Activated naive CD4-positive, alpha-beta T cell treated with anti-CD3 and anti-CD28 coated beads for 36 hours (primary cell): ENCODE measurements at regions of chr10 and their contacts with region 1.

Region 1: GRCh38 chr10:114470956-114471905 is 66.9 kb upstream of the AFAP1L2 start:
- DNase-seq: peak; percentile 79
- H3K4me3 Mint-ChIP-seq: no peak overlapping the region
- H3K27ac Mint-ChIP-seq: peak overlapping the region; percentile 44
- H3K4me1 Mint-ChIP-seq: peaks cover 22% of the 10 kb centered on the region
- H3K27me3 Mint-ChIP-seq: no peaks in the 10 kb centered on the region

Region 2: GRCh38 chr10:114486938-114487814 is 15.9 kb after region 1 on chr10:
- CTCF ChIA-PET with region 1: interaction called, 38 read pairs
- intact Hi-C with region 1: loop called (anchors 1 kb)
- DNase-seq: peak; percentile 48
- H3K4me3 Mint-ChIP-seq: no peak overlapping the region
- H3K27ac Mint-ChIP-seq: peak overlapping the region; percentile 80
- H3K4me1 Mint-ChIP-seq: peaks cover 60% of the 10 kb centered on the region
- H3K27me3 Mint-ChIP-seq: no peaks in the 10 kb centered on the region

Region 3: GRCh38 chr10:114515298-114515914 is 44.2 kb after region 1 on chr10:
- CTCF ChIA-PET with region 1: interaction called, 17 read pairs
- intact Hi-C with region 1: no loop called
- DNase-seq: peak; percentile 42
- H3K4me3 Mint-ChIP-seq: peak overlapping the region; percentile 8
- H3K27ac Mint-ChIP-seq: peak overlapping the region; percentile 80
- H3K4me1 Mint-ChIP-seq: peaks cover 90% of the 10 kb centered on the region
- H3K27me3 Mint-ChIP-seq: no peaks in the 10 kb centered on the region

Region 4: DNA sequence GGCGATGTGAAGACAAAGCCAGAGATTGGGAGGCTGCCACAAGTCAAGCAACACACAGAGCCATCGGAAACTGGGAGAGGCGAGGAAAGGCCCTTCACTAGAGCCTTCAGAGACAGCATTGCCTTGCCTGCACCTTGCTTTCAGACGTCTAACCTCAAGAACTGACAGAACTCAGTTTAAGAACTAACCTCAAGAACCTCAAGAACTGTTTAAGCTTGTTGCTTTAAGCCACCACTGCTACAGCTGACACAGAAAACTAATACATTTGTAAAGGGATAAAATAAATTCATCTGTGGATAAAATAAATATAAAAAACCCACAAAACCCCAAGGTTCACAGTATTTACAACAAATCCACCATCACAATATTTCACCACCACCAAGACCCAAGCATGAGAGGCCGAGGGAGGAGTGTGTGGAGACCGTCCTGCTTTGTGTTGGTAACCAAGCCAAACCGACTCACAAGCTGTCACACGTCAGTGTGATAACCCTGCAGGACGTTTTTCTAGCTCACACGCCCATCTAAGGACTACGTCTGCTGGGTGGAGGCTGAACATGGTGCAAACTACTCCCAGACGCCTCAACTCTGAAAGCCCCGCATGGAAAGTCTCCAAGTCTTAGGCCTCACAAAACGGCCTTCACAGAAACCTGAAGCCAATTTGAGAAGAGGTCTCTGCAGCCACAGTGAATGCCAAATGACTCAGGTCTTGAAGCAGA is 70.0 kb after region 1 on chr10:
- CTCF ChIA-PET with region 1: interaction called, 253 read pairs
- intact Hi-C with region 1: loop called (anchors 1 kb)
- DNase-seq: peak; percentile 87
- H3K4me3 Mint-ChIP-seq: peak overlapping the region; percentile 69
- H3K27ac Mint-ChIP-seq: peak overlapping the region; percentile 95
- H3K4me1 Mint-ChIP-seq: peaks cover 90% of the 10 kb centered on the region
- H3K27me3 Mint-ChIP-seq: no peaks in the 10 kb centered on the region

Region 5: GRCh38 chr10:114631666-114632417 is 160.6 kb after region 1 on chr10:
- CTCF ChIA-PET with region 1: no interaction called
- intact Hi-C with region 1: loop called (anchors 5 kb)
- DNase-seq: peak; percentile 28
- H3K4me3 Mint-ChIP-seq: peak overlapping the region; percentile 76
- H3K27ac Mint-ChIP-seq: no peak overlapping the region
- H3K4me1 Mint-ChIP-seq: peaks cover 9% of the 10 kb centered on the region
- H3K27me3 Mint-ChIP-seq: peaks cover 49% of the 10 kb centered on the region

Region 6: DNA sequence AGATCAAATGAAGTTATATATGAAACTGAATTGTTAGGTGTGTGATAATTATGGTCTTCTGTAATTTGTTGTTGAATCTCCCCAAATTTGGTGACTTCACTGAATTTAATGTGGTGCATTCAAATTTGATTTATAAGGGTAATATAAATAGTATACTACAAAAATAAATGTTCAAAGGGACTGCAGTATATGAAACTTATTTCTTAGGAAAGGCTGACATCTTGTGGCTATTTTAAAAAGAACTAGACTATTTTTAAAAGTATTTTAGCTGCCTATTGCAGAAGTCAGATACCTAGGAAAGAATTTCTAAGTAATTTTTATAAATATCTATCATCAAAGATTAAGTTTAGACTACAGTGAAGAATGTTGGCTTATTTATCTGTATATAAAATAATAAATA is 658.5 kb after region 1 on chr10:
- CTCF ChIA-PET with region 1: no interaction called
- intact Hi-C with region 1: loop called (anchors 5 kb)
- DNase-seq: no peak
- H3K4me3 Mint-ChIP-seq: no peak overlapping the region
- H3K27ac Mint-ChIP-seq: no peak overlapping the region
- H3K4me1 Mint-ChIP-seq: no peaks in the 10 kb centered on the region
- H3K27me3 Mint-ChIP-seq: peaks cover 7% of the 10 kb centered on the region

Region 7: DNA sequence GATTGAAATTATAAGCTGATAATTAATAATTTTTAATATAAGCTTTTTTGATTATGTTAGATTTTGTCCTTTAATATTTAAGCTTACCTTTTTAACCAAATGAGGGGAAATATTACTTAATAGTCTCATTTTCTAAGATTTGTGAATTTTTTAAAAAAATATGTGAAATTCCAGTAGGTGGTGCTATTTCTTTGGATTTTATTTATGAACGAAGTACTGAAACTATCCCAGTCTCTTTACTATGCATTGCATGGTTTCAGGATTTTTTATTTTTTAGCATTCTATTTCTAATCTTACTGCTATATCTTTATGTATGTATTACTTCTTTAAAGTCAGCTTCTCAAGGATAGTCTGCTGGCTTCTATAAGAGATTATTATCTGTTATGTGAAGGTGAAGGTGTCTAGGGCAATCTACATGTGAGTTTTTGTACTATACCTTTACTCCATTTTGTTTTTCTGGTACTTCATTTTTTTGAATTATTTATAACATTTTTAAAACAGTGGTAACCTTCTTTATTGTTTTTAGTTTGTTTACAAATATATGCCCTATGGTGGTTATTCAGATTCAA is 700.2 kb after region 1 on chr10:
- CTCF ChIA-PET with region 1: no interaction called
- intact Hi-C with region 1: no loop called
- DNase-seq: no peak
- H3K4me3 Mint-ChIP-seq: no peak overlapping the region
- H3K27ac Mint-ChIP-seq: no peak overlapping the region
- H3K4me1 Mint-ChIP-seq: no peaks in the 10 kb centered on the region
- H3K27me3 Mint-ChIP-seq: no peaks in the 10 kb centered on the region